HepG2 (cell line): ENCODE measurements at regions of chr10 and their contacts with region 1.

Region 1: GRCh38 chr10:123967396-123968243 is 76.0 kb upstream of the CPXM2 start:
- DNase-seq: peak; percentile 33
- ATAC-seq: peak; percentile 87
- H3K4me3 ChIP-seq: no peak overlapping the region
- H3K27ac ChIP-seq: no peak overlapping the region
- H3K4me1 ChIP-seq: peaks cover 20% of the 10 kb centered on the region
- H3K27me3 ChIP-seq: peaks cover 1 to 10% of the 10 kb centered on the region in 2 experiments; a peak in 2 of 5 replicates
- CTCF ChIP-seq: peak; percentile 94
- EP300 ChIP-seq: no peak
- POLR2A ChIP-seq: no peak
- RAD21 ChIP-seq: peak; percentile 91

Region 2: DNA sequence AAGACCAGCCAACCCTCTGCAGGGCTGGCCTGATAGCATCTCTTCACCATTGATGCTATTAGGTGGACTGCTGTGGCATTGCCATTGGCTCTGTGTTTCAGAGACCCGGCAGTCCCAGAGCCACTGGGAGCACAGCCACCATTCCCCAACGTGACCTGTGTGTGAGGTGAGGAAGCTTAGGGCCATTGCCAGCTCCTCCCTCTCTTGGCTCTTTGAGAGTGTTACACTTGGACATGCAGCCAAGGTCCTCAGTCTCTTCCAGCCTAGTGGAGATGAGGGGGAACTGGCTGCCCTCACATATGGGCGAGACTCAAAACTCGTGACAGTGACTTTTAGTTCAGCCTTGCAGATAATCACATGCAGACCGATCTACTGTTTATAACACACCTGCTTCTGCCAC is 871.2 kb before region 1 on chr10:
- CTCF ChIA-PET with region 1: no interaction called
- POLR2A ChIA-PET with region 1: no interaction called
- in situ Hi-C with region 1: loop called (anchors 25 kb)
- intact Hi-C with region 1: no loop called
- DNase-seq: no peak
- ATAC-seq: peak; percentile 41; the same call in 2 of the 3 replicates
- H3K4me3 ChIP-seq: no peak overlapping the region
- H3K27ac ChIP-seq: no peak overlapping the region
- H3K4me1 ChIP-seq: no peaks in the 10 kb centered on the region
- H3K27me3 ChIP-seq: peaks cover 1 to 33% of the 10 kb centered on the region in 2 experiments; a peak in 3 of 5 replicates
- CTCF ChIP-seq: no peak
- EP300 ChIP-seq: no peak
- POLR2A ChIP-seq: no peak
- RAD21 ChIP-seq: no peak

Region 3: GRCh38 chr10:123573236-123574108 is 394.1 kb before region 1 on chr10:
- CTCF ChIA-PET with region 1: interaction called, 10 read pairs
- POLR2A ChIA-PET with region 1: no interaction called
- in situ Hi-C with region 1: no loop called
- intact Hi-C with region 1: no loop called
- DNase-seq: peak; percentile 36
- ATAC-seq: peak; percentile 95
- H3K4me3 ChIP-seq: no peak overlapping the region
- H3K27ac ChIP-seq: no peak overlapping the region
- H3K4me1 ChIP-seq: no peaks in the 10 kb centered on the region
- H3K27me3 ChIP-seq: peaks cover 1 to 36% of the 10 kb centered on the region in 2 experiments; a peak in 4 of 5 replicates
- CTCF ChIP-seq: peak; percentile 78
- EP300 ChIP-seq: no peak
- POLR2A ChIP-seq: no peak
- RAD21 ChIP-seq: peak; percentile 19; the same call in 1 of the 2 replicates

Region 4: DNA sequence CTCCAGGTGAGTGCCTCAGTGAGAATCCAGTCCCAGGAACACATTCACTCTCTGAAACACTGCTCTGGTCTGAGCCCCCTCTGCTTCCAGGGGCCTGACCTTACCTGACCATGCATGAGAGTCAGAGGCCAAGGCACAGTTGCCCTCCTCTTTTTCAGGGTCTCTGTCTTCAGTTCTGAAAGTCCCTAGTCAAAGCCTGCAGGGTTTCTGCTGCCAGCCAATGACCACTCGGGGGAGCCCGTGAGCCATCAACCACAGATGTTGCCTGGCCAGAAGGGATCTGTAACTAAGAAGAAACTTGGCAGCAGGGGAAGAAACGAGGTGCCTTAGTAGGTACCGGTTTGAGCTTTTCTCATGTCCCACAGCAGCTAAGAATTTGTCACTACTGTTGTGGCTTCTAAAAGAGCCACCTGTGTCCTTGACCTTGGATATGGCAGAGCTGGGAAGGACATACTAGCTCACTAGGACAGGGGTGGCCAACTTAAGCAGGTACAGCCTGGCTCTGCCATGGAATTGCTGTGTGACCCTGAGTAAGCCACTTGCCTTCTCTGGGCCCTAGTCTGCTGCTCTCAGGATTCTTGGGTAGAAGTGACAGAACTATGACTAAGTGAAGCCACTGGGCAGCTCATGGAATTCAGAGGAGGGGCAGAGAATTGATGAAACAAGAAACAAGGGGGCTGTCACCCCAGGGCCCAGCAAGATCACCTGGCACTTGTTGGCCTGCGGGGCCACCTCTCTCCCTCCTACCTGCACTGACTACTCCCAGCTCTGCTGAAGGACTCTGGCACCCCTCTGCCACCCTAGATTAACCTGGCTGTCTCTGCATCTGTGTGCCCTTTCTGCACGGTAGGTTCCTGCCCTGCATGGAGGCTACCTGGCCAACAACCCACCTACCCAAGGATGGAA is 385.3 kb before region 1 on chr10:
- CTCF ChIA-PET with region 1: interaction called, 64 read pairs
- POLR2A ChIA-PET with region 1: no interaction called
- in situ Hi-C with region 1: loop called (anchors 5 kb)
- intact Hi-C with region 1: loop called (anchors 1 kb)
- DNase-seq: peak; percentile 57
- ATAC-seq: peak; percentile 88
- H3K4me3 ChIP-seq: no peak overlapping the region
- H3K27ac ChIP-seq: no peak overlapping the region
- H3K4me1 ChIP-seq: peaks cover 7% of the 10 kb centered on the region; the same call in 1 of the 2 replicates
- H3K27me3 ChIP-seq: peaks cover 3 to 18% of the 10 kb centered on the region in 2 experiments; a peak in 3 of 5 replicates
- CTCF ChIP-seq: peak; percentile 89
- EP300 ChIP-seq: no peak
- POLR2A ChIP-seq: no peak
- RAD21 ChIP-seq: peak; percentile 69

Region 5: GRCh38 chr10:123642293-123642692 is 325.3 kb before region 1 on chr10:
- CTCF ChIA-PET with region 1: interaction called, 5 read pairs
- POLR2A ChIA-PET with region 1: no interaction called
- in situ Hi-C with region 1: no loop called
- intact Hi-C with region 1: loop called (anchors 1 kb)
- DNase-seq: no peak
- ATAC-seq: no peak
- H3K4me3 ChIP-seq: no peak overlapping the region
- H3K27ac ChIP-seq: no peak overlapping the region
- H3K4me1 ChIP-seq: no peaks in the 10 kb centered on the region
- H3K27me3 ChIP-seq: peaks cover 2 to 19% of the 10 kb centered on the region in 2 experiments; a peak in 2 of 5 replicates
- CTCF ChIP-seq: no peak
- EP300 ChIP-seq: no peak
- POLR2A ChIP-seq: no peak
- RAD21 ChIP-seq: no peak